T-cell (primary cell): ENCODE measurements at regions of chr15 and their contacts with region 1.

Region 1: DNA sequence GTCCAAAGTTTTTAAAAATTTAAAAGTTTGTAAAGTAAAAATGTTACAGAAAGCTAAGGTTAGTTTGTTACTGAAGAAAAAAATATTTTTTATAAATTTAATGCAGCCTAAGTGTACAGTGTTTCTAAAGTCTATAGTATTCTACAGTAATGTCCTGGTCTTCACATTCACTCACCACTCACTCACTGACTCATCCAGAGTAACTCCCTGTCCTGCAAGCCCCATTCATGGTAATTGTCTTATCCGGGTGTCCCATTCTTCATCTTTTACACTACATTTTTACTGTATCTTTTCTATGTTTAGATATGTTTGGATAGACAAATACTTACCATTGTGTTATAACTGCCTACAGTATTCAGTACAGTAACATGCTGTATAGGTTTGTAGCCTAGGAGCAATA is 36.7 kb upstream of the ATP10A start:
- DNase-seq: no peak
- ATAC-seq: no peak
- H3K4me3 ChIP-seq: no peak overlapping the region
- H3K4me3 Mint-ChIP-seq: no peak overlapping the region
- H3K27ac ChIP-seq: no peak overlapping the region
- H3K27ac Mint-ChIP-seq: no peak overlapping the region
- H3K4me1 ChIP-seq: peaks cover 0 to 13% of the 10 kb centered on the region in 2 experiments
- H3K4me1 Mint-ChIP-seq: peaks cover 10 to 17% (median 14%) of the 10 kb centered on the region in 3 donors
- H3K27me3 ChIP-seq: peaks cover 0 to 4% of the 10 kb centered on the region in 2 experiments
- H3K27me3 Mint-ChIP-seq: peaks cover 0 to 1% of the 10 kb centered on the region in 2 donors

Region 2: GRCh38 chr15:25877681-25878080 is 22.2 kb before region 1 on chr15:
- CTCF ChIA-PET with region 1: no interaction called
- POLR2A ChIA-PET with region 1: interaction called in 1 of 2 experiments, 15 read pairs
- DNase-seq: no peak
- ATAC-seq: no peak
- H3K4me3 ChIP-seq: no peak overlapping the region
- H3K4me3 Mint-ChIP-seq: no peak overlapping the region
- H3K27ac ChIP-seq: no peak overlapping the region
- H3K27ac Mint-ChIP-seq: no peak overlapping the region
- H3K4me1 ChIP-seq: no peaks in the 10 kb centered on the region
- H3K4me1 Mint-ChIP-seq: no peaks in the 10 kb centered on the region
- H3K27me3 ChIP-seq: no peaks in the 10 kb centered on the region
- H3K27me3 Mint-ChIP-seq: no peaks in the 10 kb centered on the region

Region 3: DNA sequence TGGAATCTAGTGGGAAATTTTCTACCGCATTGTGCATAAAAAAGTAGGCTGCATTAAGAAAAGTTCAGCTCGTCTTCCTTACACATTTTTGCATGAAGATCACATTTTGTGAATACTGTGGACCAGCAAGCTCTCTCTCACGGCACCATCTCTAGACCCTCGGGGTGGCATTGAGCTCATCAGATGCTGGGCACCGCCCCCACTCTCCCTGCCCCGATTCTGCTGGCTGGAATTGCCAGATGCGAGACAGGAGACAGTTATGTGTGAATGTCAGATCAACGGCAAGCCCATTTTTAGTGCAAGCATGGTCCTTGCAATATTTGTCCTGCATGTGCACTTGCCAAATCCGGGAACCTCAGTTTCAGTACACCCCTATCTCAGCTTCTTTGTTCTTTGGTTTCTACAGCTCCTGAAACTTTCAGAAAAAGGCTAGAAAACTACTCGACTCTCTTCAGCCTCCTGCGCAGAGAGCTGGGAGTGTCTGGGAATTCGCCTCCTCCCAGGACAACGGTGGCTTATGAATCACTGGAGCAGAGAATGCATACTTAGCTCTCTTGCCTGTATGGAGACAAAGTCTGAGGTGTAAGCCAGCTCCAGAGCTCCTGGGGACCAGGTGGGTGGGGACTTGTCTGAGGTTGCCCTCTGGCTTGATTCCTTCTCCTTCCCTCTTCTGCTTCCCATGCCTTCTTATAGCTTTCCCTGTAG is 248.4 kb after region 1 on chr15:
- CTCF ChIA-PET with region 1: no interaction called
- POLR2A ChIA-PET with region 1: no interaction called
- DNase-seq: no peak
- ATAC-seq: no peak
- H3K4me3 ChIP-seq: no peak overlapping the region
- H3K4me3 Mint-ChIP-seq: no peak overlapping the region
- H3K27ac ChIP-seq: no peak overlapping the region
- H3K27ac Mint-ChIP-seq: no peak overlapping the region
- H3K4me1 ChIP-seq: no peaks in the 10 kb centered on the region
- H3K4me1 Mint-ChIP-seq: no peaks in the 10 kb centered on the region
- H3K27me3 ChIP-seq: peaks cover 0 to 3% of the 10 kb centered on the region in 2 experiments
- H3K27me3 Mint-ChIP-seq: peaks cover 19 to 24% of the 10 kb centered on the region in 2 donors